Mammary epithelial cell (primary cell): ENCODE measurements at regions of chr1 and their contacts with region 1.

Region 1: DNA sequence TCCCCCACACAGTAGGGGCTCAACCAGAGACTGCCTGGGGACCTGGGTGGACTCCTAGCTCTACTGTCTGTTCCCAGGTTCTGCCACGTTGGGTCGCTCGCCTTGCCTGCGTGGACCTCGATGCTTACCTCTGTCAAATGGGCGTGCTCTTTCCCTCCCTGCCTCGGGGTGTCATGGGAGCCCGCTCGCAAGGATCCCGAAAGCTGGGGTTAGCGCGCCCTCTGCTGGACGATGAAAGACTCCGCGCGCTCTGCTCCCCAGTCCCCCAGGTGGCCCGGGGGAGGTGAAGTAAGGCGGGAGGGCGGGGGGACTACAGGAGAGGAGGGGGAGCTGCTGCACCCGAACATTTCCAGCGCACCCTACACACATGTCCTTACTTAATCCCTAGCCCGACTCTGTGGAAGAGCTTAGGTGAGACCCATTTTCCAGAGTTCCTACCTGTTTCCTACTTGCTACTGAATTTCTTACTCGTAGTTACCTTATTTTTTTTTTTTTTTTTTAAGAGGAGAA is 2.3 kb upstream of the BSND start:
- DNase-seq: peak; percentile 47
- H3K4me3 ChIP-seq: no peak overlapping the region
- H3K27ac ChIP-seq: no peak overlapping the region
- H3K4me1 ChIP-seq: peaks cover 5% of the 10 kb centered on the region
- H3K27me3 ChIP-seq: no peaks in the 10 kb centered on the region
- CTCF ChIP-seq: peak; percentile 59 to 88

Region 2: DNA sequence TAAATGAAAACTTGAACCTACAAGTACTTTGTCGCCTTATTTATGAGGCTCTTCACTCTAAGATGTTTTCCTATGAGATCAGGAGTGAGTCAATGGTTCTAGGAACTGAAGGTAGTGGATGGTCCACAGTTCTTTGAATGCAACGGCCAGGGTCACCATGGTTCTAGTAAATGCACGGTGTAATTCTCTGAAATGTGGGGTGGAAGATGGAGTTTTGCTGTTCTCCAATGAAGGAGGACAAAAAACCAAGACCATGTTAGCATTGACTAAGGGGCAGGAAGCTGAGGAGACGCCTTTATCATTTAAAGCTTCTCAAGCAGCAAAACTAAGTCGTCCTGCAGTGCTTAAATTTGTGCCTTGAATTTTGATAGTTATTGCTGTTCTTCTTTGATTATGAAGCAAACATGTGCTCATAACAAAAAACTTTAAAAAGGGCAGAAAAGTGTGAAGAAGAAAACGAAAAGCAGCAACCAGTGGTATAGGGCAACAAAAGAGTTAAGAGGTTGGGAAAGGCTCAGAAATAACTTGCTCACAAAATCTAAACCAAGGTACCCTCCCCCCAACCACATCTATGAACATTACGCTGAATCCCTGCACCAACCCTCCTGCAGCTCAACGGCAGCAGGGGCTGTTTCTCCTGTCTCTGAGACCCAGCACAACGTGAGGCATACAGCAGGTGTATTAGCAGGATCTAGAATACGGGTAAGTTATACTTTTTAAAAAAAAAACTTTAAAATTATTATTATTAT is 711.5 kb before region 1 on chr1:
- CTCF ChIA-PET with region 1: interaction called, 10 read pairs
- dilution Hi-C with region 1: no loop called
- in situ Hi-C with region 1: no loop called
- intact Hi-C with region 1: no loop called
- DNase-seq: no peak
- H3K4me3 ChIP-seq: no peak overlapping the region
- H3K27ac ChIP-seq: no peak overlapping the region
- H3K4me1 ChIP-seq: peaks cover 16% of the 10 kb centered on the region
- H3K27me3 ChIP-seq: no peaks in the 10 kb centered on the region
- CTCF ChIP-seq: no peak

Region 3: GRCh38 chr1:54671985-54672608 is 324.3 kb before region 1 on chr1:
- CTCF ChIA-PET with region 1: no interaction called
- dilution Hi-C with region 1: no loop called
- in situ Hi-C with region 1: no loop called
- intact Hi-C with region 1: loop called (anchors 2 kb)
- DNase-seq: peak; percentile 41
- H3K4me3 ChIP-seq: no peak overlapping the region
- H3K27ac ChIP-seq: no peak overlapping the region
- H3K4me1 ChIP-seq: no peaks in the 10 kb centered on the region
- H3K27me3 ChIP-seq: peaks cover 3% of the 10 kb centered on the region
- CTCF ChIP-seq: peak; percentile 94 to 96

Region 4: DNA sequence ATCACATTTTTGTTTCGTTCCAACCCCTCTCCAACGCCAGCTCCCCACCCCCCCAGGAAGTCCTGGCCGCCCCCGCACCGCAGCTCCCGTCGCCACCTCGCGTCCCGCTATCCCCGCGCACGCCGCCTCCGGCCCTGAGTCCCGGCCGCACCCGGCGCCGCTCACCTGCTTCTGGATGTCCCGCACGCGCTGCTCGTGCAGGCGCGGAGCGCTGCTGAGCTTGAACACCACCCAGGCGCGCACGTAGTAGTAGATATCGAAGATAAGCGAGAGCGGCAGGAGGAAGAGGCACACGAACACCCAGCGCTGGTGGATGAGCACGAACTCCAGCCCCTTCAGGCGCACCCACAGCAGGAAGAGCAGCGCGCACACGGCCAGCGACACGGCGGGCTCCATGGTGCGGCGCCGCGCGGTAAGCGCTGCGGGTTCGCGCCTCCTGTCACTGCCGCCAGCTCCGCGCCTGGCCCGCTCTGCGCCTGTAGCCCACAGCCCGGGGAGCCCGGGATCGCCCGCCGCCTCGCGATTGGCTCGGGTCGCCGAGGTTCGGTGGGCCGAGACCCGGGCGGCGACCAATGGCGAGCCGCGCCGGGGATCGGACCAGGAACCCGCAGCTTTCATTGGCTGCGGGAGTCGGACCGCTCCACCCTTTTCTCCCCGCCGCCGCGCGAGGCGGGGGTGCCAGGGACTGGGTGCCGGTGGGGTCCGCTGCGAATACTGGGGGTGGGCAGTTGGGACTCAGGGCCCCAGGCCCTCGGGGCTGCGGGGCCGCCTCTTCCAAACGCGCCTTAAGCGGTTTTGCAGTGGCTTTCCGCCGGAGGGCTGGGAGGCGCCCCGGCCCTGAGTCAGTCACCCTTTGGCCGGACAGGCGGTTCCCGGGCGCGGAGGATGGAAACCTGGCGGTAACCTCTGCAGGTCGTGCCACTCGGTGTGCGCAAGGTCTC is 109.4 kb before region 1 on chr1 and contains the start of gene DHCR24:
- CTCF ChIA-PET with region 1: no interaction called
- dilution Hi-C with region 1: no loop called
- in situ Hi-C with region 1: loop called in 1 of 2 experiments (anchors 10 kb)
- intact Hi-C with region 1: loop called (anchors 5 kb)
- DNase-seq: peak; percentile 88
- H3K4me3 ChIP-seq: peak within 1 kb of the TSS; percentile 76 to 98 (median 84)
- H3K27ac ChIP-seq: peak within 1 kb of the TSS; percentile 66
- H3K4me1 ChIP-seq: peaks cover 48% of the 10 kb centered on the region
- H3K27me3 ChIP-seq: no peaks in the 10 kb centered on the region
- CTCF ChIP-seq: no peak
- total RNA-seq, gene DHCR24: 335 to 503 TPM

Region 5: DNA sequence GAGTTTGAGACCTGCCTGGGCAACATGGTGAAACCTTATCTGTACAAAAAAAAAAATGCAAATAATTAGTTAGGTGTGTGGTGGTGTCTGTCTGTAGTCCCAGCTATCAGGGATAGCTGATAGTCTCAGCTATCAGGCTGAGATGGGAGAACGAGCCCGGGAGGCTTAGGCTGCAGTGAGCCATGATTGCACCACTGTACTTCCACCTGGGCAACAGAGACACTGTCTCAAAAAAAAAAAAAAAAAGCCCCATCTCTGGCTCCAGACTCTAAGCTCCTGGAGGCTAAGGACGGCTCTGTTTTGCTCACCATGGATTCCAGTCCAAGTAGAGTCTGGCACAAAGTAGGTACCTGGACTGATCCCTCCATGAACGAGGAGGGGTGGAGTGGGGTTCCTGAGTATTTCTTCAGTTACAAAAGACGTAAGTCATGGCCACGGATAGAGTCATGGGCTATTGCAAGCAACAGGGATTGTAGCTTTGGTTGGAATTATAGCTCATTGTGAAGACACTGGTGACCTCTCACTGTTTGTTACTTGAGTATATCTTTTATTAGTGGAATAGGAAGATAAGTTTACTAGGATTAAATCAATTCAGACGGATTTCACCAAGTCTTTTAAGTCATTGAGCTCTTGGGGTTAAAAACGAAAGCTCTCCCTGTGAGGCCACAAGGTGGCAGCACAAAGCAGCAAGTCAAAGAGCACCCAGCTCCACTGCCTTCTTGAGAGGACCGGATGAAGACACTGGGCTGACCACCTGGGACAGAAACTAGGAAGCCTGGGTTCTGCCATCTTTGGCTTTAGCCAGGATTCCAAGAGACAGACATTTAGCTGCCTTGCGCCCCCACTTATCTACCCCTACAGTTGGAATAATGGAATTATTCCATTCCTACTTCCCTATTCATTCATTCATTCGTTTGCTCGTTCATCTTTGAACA is 51.5 kb before region 1 on chr1:
- CTCF ChIA-PET with region 1: no interaction called
- dilution Hi-C with region 1: loop called (anchors 5 kb)
- in situ Hi-C with region 1: loop called (anchors 5 kb)
- intact Hi-C with region 1: loop called (anchors 1 kb)
- DNase-seq: peak; percentile 60
- H3K4me3 ChIP-seq: peak overlapping the region in 1 of 3 experiments; percentile 3
- H3K27ac ChIP-seq: no peak overlapping the region
- H3K4me1 ChIP-seq: peaks cover 12% of the 10 kb centered on the region
- H3K27me3 ChIP-seq: no peaks in the 10 kb centered on the region
- CTCF ChIP-seq: peak; percentile 88 to 89

Region 6: DNA sequence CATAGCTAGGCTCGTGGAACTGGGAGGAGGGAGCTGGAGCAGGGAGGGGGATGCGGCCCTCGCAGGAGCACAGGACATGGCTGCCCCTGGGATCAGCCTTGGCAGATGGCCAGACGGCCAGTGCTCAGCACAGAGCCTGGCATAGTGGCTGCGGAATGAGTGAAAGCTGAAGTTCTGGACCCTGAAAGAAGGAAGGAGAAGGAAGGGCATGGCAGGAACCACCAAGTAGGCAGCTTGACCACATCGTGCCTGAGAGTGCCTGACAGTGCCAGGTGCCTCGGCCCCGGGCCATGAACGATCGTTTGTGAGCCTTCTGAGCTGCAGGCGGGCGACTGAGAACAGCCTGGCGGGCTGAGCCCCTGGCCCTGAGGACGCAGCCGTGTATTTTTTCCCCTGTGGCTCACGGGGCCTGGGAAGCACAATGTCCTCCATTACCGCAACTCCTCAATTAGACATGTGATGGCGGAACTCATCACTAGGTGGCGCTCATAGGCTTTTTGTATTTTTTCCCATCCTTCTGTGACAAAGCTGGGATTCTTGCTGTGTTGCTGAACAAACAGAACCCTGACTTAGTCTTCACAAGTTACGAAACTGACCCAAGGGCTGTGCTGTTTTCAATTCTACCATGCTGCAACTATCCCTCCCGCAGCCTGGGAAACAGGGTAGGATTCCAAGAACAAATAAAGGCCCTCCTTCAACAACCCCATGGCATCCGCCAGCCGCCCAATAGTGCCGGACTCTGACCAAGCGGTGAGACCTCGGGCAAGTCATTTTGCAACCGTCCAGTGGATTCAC is 45.8 kb before region 1 on chr1:
- CTCF ChIA-PET with region 1: interaction called, 10 read pairs
- dilution Hi-C with region 1: loop called (anchors 5 kb)
- in situ Hi-C with region 1: loop called (anchors 5 kb)
- intact Hi-C with region 1: loop called (anchors 1 kb)
- DNase-seq: peak; percentile 71
- H3K4me3 ChIP-seq: peak overlapping the region in 1 of 3 experiments; percentile 10
- H3K27ac ChIP-seq: no peak overlapping the region
- H3K4me1 ChIP-seq: peaks cover 31% of the 10 kb centered on the region
- H3K27me3 ChIP-seq: no peaks in the 10 kb centered on the region
- CTCF ChIP-seq: peak; percentile 60 to 76

Region 7: DNA sequence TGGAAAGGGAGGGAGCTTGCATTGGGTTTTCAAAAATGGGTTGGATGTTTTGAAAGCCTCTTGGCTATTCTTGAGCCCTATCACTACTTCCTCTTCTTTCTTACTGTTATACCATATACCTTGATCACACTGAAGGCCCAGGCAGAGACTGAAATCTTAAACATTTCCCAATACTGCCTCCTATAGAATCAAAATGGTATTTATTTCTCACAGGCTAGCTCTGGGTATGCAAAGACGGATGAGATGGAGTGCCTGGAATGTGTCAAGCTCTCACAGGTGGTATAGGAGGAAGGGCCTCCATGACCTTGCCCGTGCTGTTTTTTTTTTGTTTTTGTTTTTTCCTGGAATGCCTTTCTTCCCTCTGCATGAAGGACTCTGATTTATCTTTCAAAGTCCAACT is 487.1 kb after region 1 on chr1:
- CTCF ChIA-PET with region 1: no interaction called
- dilution Hi-C with region 1: no loop called
- in situ Hi-C with region 1: no loop called
- intact Hi-C with region 1: no loop called
- DNase-seq: no peak
- H3K4me3 ChIP-seq: no peak overlapping the region
- H3K27ac ChIP-seq: no peak overlapping the region
- H3K4me1 ChIP-seq: peaks cover 3% of the 10 kb centered on the region
- H3K27me3 ChIP-seq: no peaks in the 10 kb centered on the region
- CTCF ChIP-seq: no peak